A673 (cell line): ENCODE measurements at regions of chr1 and their contacts with region 1.

Region 1: DNA sequence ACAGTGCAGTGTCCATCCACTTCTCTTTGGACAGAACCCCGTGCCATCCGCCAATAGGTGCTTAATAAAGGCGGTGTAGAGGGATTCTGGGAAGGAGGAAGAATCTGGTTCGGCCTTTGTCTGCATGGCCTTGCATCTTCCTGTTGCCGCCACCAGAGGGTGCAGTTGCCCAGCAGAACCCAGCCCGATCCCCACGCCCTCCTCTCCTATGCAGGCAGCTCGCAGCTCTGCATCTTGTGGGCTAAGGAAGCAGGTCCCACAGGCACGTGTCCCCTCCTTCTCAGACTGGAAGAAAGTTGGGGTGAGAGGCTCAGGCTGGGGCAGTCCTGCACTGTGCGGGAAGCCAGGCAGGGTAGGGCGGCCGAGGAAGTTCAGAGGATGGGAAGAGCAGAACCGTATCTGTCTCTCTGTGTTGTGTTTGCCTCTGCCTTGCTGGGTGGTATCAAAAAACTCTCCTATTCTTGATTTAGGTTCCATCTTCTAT is 20.8 kb downstream of the NAV1 start:
- DNase-seq: peak; percentile 91
- H3K4me3 ChIP-seq: no peak overlapping the region
- H3K27ac ChIP-seq: peak overlapping the region; percentile 42
- H3K4me1 ChIP-seq: peaks cover 38% of the 10 kb centered on the region
- H3K27me3 ChIP-seq: no peaks in the 10 kb centered on the region
- CTCF ChIP-seq: peak; percentile 95

Region 2: GRCh38 chr1:201481761-201482493 is 77.8 kb before region 1 on chr1:
- CTCF ChIA-PET with region 1: interaction called, 6 read pairs
- POLR2A ChIA-PET with region 1: no interaction called
- intact Hi-C with region 1: loop called (anchors 2 kb)
- DNase-seq: peak; percentile 89
- H3K4me3 ChIP-seq: peak overlapping the region; percentile 27
- H3K27ac ChIP-seq: peak overlapping the region; percentile 43
- H3K4me1 ChIP-seq: peaks cover 45% of the 10 kb centered on the region
- H3K27me3 ChIP-seq: no peaks in the 10 kb centered on the region
- CTCF ChIP-seq: peak; percentile 95

Region 3: DNA sequence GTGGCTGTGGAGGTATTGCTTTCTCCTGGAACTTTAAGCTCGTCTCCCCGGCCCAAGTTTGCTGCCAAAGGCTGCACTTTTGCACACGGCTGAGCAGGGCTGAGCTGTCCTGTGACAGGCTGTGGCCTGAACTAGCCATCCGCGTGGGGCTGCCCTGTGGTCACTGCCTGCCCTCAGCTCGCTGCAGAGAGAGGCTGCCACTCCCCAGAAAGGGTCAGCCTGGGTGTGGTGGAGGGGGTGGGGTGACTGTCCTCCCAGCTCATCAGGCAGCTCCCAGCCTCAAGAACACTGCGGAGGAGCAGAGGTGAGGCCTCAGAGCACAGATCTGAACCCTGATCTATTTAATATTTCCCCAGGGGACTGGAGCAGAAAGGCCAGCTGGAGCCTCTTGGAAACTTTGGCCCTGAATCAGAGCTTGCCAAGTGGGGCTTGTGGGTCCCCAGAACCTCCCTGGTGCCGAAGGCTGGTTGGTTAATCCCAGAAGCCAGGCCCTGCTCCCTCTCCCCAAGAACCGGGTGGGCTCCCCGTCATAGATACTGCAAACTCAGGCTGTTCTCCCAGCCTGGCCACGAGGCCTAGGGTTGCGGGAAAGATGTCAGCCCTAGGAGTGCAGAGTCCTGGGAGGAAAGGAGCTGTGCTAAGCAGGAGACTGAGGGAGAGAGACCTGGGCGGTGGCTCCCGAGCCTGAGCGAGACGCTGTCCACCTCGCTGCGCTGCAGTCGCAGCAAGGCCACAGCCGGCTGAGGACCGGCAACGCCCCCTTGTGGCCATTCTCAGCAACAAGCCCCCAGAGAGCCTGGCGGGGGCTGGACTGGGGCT is 144.1 kb after region 1 on chr1:
- CTCF ChIA-PET with region 1: interaction called, 12 read pairs
- POLR2A ChIA-PET with region 1: no interaction called
- intact Hi-C with region 1: loop called (anchors 1 kb)
- DNase-seq: peak; percentile 87
- H3K4me3 ChIP-seq: no peak overlapping the region
- H3K27ac ChIP-seq: no peak overlapping the region
- H3K4me1 ChIP-seq: peaks cover 30% of the 10 kb centered on the region
- H3K27me3 ChIP-seq: no peaks in the 10 kb centered on the region
- CTCF ChIP-seq: peak; percentile 96

Region 4: DNA sequence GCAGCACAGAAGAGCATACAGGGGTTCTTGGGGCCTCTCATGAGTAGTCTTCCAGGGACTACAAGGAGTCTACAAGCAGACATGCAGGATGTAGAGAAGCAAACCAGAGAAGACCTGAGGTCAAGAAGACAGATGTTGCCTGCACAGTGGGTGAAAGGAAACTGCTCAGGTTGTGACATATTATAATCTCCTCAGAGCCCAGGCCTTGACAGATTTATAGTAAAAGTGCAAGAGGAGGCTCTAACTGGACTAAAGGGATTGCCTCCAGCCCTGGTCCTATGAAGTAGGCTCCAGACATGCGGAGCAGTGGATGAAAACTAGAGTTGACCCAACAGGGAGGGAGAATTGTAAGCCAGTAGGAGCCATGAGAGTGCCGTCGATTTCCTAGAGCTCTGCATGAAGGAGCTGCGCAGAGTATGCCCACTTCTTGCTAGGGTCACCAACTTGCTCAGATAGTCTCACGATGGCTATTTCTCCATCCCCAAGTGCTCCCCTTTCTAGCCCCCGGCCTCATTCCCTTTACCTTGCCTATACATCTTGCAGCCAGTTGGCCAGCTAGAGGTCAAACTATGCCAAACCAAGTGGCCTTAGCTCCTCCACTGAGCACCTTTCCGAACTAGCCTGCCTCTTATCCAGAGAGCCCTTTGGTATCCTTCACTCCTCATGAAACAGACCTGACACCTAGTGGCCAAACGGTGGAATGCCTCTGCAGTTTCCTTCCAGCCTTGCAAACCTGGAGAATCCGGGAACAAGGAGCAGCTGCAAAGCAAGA is 233.0 kb after region 1 on chr1:
- CTCF ChIA-PET with region 1: interaction called, 18 read pairs
- POLR2A ChIA-PET with region 1: no interaction called
- intact Hi-C with region 1: loop called (anchors 1 kb)
- DNase-seq: peak; percentile 91
- H3K4me3 ChIP-seq: no peak overlapping the region
- H3K27ac ChIP-seq: peak overlapping the region; percentile 78
- H3K4me1 ChIP-seq: peaks cover 40% of the 10 kb centered on the region
- H3K27me3 ChIP-seq: no peaks in the 10 kb centered on the region
- CTCF ChIP-seq: peak; percentile 98

Region 5: DNA sequence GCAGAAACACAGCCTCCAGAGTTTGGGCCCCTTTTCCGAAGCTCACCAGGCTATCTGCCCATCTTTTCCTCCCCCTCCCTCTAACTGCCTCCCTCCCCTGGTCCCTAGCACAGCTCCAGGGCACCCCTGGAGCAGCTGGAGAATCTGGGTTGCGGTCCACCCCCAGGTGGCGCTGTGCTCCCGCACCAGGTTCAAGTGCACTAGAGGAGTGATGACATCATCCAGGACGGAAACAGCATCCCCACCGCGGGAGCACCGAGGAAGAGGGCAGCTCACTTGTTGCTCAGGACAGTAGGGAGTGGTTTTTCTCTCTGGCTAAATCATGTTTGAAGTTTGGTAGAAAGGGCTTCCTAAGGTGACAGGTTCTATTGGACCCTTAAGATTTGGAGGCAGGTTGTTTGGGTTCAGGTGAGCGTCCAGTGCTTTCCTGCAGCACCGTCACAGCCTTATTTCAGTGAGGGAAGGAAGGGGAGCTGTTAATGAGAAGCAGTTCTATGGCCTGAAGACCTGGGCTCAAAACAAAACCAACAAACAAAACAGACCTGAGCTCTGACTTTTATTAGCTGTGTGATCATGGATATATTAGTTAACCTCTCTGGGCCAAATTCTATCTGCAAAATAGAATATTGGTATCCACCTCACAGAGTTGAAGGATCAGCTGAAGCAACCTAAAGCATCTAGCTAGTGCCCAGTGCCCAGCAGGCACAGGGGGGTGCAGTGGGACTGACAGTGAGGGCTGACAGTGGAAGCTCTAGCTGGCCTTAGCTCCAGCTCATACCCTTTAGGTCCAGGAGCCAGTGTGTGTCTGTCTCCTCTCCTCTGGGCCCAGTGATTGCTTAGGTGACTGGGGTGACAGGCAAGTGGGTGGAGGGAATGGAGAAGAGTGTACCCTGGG is 336.4 kb after region 1 on chr1:
- CTCF ChIA-PET with region 1: no interaction called
- POLR2A ChIA-PET with region 1: no interaction called
- intact Hi-C with region 1: no loop called
- DNase-seq: peak; percentile 93
- H3K4me3 ChIP-seq: no peak overlapping the region
- H3K27ac ChIP-seq: no peak overlapping the region
- H3K4me1 ChIP-seq: no peaks in the 10 kb centered on the region
- H3K27me3 ChIP-seq: no peaks in the 10 kb centered on the region
- CTCF ChIP-seq: peak; percentile 99

Region 6: DNA sequence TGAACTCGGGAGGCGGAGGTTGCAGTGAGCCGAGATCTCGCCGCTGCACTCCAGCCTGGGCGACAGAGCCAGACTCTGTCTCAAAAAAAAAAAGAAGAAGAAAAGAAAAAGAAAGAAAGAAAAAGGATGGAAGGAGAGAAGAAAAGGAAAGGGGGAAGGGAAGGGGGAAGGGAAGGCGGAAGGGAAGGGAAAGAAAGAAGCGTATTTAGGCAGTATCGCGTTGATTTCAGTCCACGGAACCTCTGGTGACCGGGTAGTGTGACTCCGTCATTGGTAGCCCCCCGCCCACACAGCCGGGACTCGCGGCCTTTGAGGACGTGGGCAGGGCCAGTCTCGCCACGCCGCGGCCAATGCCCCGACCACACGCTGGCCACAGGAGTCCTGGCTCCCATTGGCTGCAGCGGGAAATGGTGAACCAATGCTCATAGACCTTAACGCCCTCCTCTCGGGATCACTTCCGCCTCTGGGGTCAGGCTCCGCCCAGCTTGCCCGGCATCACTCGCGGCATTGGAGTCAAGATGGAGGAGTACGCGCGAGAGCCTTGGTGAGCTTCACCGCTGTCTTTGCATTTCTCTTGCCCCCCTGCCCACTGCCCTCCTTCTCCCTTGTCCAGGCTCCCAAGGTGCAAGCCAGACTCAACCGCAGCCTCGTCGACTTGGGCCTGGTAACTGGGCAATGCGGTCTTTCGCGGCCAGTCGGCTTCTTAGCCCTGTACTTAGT is 395.4 kb after region 1 on chr1 and contains the start of gene TIMM17A:
- CTCF ChIA-PET with region 1: interaction called, 12 read pairs
- POLR2A ChIA-PET with region 1: no interaction called
- intact Hi-C with region 1: no loop called
- DNase-seq: peak; percentile 98
- H3K4me3 ChIP-seq: peak within 1 kb of the TSS; percentile 80
- H3K27ac ChIP-seq: peak within 1 kb of the TSS; percentile 84
- H3K4me1 ChIP-seq: peaks cover 4% of the 10 kb centered on the region
- H3K27me3 ChIP-seq: no peaks in the 10 kb centered on the region
- CTCF ChIP-seq: no peak
- total RNA-seq, gene TIMM17A: 111 and 112 TPM in 2 replicates